ENCODE measurements at regions of chr6 and their contacts with region 1.

Region 1: GRCh38 chr6:56851541-56852259 is 103.2 kb upstream of the BEND6 start:
- DNase-seq: peak; percentile 89
- ATAC-seq: peak; percentile 89
- H3K4me3 ChIP-seq: peak overlapping the region; percentile 100
- H3K27ac ChIP-seq: peak overlapping the region; percentile 82
- H3K4me1 ChIP-seq: peaks cover 26% of the 10 kb centered on the region
- H3K27me3 ChIP-seq: no peaks in the 10 kb centered on the region
- CTCF ChIP-seq: peak; percentile 57 to 84 (median 78)
- EP300 ChIP-seq: peak in 1 of 2 experiments; percentile 68; a peak in 2 of 4 replicates
- POLR2A ChIP-seq: no peak
- RAD21 ChIP-seq: peak; percentile 90

Region 2: DNA sequence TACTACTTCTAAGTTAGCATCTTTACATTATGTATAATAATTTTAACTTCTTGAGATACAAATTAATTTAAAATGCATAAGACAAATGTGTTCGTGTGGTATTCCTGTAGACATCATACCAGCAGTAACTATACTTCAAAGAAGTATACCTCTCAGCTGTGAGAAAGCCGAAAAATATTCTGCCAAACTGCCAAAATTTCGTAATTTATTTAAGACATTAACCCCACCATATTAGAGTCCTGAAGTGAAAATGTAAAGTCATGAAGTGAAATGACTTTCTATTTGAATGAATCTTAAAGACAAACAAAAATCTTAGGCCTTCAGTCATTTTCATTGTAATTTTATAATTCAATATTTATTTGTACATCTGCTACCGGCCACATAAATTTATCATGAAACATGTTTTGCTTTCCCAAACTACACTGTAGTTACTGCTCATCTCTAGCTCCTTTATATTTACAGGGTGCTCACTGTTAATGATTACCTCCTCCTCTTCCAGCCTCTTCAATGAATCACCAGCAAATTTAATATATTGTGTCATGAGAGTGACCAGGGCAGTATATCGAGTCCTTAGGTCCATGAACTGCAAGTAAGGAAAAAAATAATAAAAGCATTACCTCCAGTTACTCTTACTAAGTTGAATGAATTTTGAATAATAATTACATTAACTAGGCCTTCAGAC is 227.5 kb before region 1 on chr6:
- CTCF ChIA-PET with region 1: interaction called, 10 read pairs
- POLR2A ChIA-PET with region 1: no interaction called
- RAD21 ChIA-PET with region 1: interaction called, 4 read pairs
- SMC1A ChIA-PET with region 1: interaction called, 4 read pairs
- in situ Hi-C with region 1: no loop called
- intact Hi-C with region 1: no loop called
- DNase-seq: no peak
- ATAC-seq: no peak
- H3K4me3 ChIP-seq: no peak overlapping the region
- H3K27ac ChIP-seq: no peak overlapping the region
- H3K4me1 ChIP-seq: no peaks in the 10 kb centered on the region
- H3K27me3 ChIP-seq: no peaks in the 10 kb centered on the region
- CTCF ChIP-seq: no peak
- EP300 ChIP-seq: no peak
- POLR2A ChIP-seq: no peak
- RAD21 ChIP-seq: no peak

Region 3: DNA sequence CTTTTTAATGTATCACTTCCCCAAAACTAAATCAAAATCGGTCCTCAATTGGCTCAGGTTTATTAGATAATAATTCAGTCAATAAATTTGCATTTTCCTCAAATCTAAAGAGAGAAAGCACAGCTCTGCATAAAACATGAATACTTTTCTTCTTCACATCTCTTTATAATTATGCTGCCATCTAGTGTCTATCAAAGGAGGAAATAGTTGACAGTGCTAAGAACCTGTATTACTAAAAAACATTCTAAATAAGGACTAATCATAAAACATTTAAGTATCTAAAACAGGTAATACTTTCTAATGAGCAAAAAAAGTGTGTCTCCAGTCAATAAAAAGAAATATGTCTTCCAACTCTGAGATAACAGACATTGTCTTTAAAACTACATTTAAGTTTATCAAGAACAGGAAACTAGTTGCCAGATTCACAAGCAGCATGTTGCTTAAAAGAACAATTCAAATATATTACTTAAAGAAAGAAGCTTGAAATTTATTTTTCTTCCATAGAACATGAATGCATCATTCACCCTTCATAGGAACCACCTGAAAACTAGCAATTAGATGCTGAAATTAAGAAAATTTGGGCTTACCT is 152.5 kb before region 1 on chr6:
- CTCF ChIA-PET with region 1: interaction called, 46 read pairs
- POLR2A ChIA-PET with region 1: no interaction called
- RAD21 ChIA-PET with region 1: interaction called, 37 read pairs
- SMC1A ChIA-PET with region 1: interaction called, 5 read pairs
- in situ Hi-C with region 1: no loop called
- intact Hi-C with region 1: no loop called
- DNase-seq: no peak
- ATAC-seq: peak; percentile 69
- H3K4me3 ChIP-seq: no peak overlapping the region
- H3K27ac ChIP-seq: no peak overlapping the region
- H3K4me1 ChIP-seq: no peaks in the 10 kb centered on the region
- H3K27me3 ChIP-seq: no peaks in the 10 kb centered on the region
- CTCF ChIP-seq: peak; percentile 26 to 43 (median 26); a peak in 3 of 6 replicates
- EP300 ChIP-seq: no peak
- POLR2A ChIP-seq: no peak
- RAD21 ChIP-seq: peak; percentile 45; the same call in 1 of the 2 replicates

Region 4: GRCh38 chr6:56742122-56742791 is 109.4 kb before region 1 on chr6:
- CTCF ChIA-PET with region 1: interaction called, 9 read pairs
- POLR2A ChIA-PET with region 1: interaction called, 3 read pairs
- RAD21 ChIA-PET with region 1: interaction called, 19 read pairs
- SMC1A ChIA-PET with region 1: interaction called, 17 read pairs
- in situ Hi-C with region 1: no loop called
- intact Hi-C with region 1: no loop called
- DNase-seq: no peak
- ATAC-seq: peak; percentile 83
- H3K4me3 ChIP-seq: peak overlapping the region; percentile 17; the same call in 1 of the 2 replicates
- H3K27ac ChIP-seq: peak overlapping the region; percentile 50
- H3K4me1 ChIP-seq: peaks cover 20% of the 10 kb centered on the region
- H3K27me3 ChIP-seq: no peaks in the 10 kb centered on the region
- CTCF ChIP-seq: no peak
- EP300 ChIP-seq: no peak
- POLR2A ChIP-seq: no peak
- RAD21 ChIP-seq: no peak

Region 5: DNA sequence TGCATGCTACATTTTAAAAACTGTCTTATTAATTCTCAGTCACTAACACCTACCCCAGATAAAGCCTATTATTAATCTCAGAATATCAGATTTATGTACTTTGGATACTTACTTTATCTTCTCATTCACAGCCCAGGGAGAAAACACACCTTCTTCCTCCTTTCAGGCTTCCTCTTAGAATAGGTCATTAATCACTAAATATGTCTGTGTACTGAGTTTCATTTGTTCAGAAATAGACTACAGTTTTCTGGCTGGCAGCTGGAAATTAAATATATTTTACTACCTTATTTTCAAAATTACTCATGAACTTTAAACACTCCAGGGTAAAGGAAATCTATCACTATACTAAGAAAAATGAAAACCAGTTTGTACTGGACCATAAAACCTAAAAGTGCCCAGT is 61.3 kb before region 1 on chr6:
- CTCF ChIA-PET with region 1: interaction called, 10 read pairs
- POLR2A ChIA-PET with region 1: interaction called, 3 read pairs
- RAD21 ChIA-PET with region 1: interaction called, 14 read pairs
- SMC1A ChIA-PET with region 1: interaction called, 10 read pairs
- in situ Hi-C with region 1: no loop called
- intact Hi-C with region 1: no loop called
- DNase-seq: no peak
- ATAC-seq: peak; percentile 72
- H3K4me3 ChIP-seq: no peak overlapping the region
- H3K27ac ChIP-seq: peak overlapping the region; percentile 82
- H3K4me1 ChIP-seq: peaks cover 41% of the 10 kb centered on the region
- H3K27me3 ChIP-seq: no peaks in the 10 kb centered on the region
- CTCF ChIP-seq: no peak
- EP300 ChIP-seq: peak in 1 of 2 experiments; percentile 65; a peak in 1 of 4 replicates
- POLR2A ChIP-seq: no peak
- RAD21 ChIP-seq: no peak

Region 6: DNA sequence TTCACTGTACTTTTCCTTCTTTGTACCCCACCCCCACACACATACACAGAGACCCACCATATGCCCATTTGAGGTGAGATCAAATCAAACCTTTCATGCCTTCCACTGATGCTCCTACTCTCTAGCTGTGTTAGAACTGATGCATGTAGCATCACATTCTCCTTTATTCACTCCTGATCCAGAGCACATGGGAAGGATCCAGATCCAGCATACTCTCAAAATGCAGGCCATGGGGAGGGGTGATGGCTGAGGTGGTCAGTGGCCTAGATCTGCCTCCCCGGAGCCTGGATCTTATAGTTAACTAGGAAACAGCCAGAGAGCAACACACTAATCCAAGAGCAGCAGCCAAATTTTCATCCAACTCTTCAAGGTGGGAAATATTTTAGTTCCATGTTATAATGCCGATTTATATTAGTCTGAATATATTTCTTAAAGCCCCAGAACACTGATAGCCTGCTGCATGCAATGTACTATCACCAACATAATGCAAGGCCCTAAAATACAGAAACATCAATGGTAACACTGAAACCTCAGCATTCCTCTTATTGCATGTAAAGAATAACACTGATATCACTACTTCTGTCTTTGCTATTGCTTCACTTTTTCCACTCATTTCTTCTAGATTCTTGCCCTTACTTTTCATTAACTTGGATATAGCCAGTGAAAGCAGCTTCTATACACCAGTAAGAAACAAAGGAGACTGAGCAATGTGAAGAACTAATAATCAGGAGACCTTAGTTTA is 23.6 kb before region 1 on chr6:
- CTCF ChIA-PET with region 1: interaction called, 6 read pairs
- POLR2A ChIA-PET with region 1: no interaction called
- RAD21 ChIA-PET with region 1: interaction called, 5 read pairs
- SMC1A ChIA-PET with region 1: interaction called, 11 read pairs
- in situ Hi-C with region 1: no loop called
- intact Hi-C with region 1: no loop called
- DNase-seq: no peak
- ATAC-seq: no peak; the same call in 2 of the 3 replicates
- H3K4me3 ChIP-seq: no peak overlapping the region
- H3K27ac ChIP-seq: no peak overlapping the region; the same call in 1 of the 2 replicates
- H3K4me1 ChIP-seq: peaks cover 16% of the 10 kb centered on the region; the same call in 1 of the 2 replicates
- H3K27me3 ChIP-seq: no peaks in the 10 kb centered on the region
- CTCF ChIP-seq: no peak
- EP300 ChIP-seq: no peak
- POLR2A ChIP-seq: no peak
- RAD21 ChIP-seq: no peak

Region 7: GRCh38 chr6:56902641-56903464 is 51.2 kb after region 1 on chr6:
- CTCF ChIA-PET with region 1: interaction called, 21 read pairs
- POLR2A ChIA-PET with region 1: no interaction called
- RAD21 ChIA-PET with region 1: interaction called, 7 read pairs
- SMC1A ChIA-PET with region 1: interaction called, 12 read pairs
- in situ Hi-C with region 1: no loop called
- intact Hi-C with region 1: no loop called
- DNase-seq: no peak
- ATAC-seq: peak; percentile 80
- H3K4me3 ChIP-seq: no peak overlapping the region
- H3K27ac ChIP-seq: no peak overlapping the region
- H3K4me1 ChIP-seq: no peaks in the 10 kb centered on the region
- H3K27me3 ChIP-seq: no peaks in the 10 kb centered on the region
- CTCF ChIP-seq: peak; percentile 61 to 65 (median 61); a peak in 5 of 6 replicates
- EP300 ChIP-seq: no peak
- POLR2A ChIP-seq: no peak
- RAD21 ChIP-seq: peak; percentile 80

Measured in GM12878 (cell line).